ENCODE measurements at regions of chr10 and their contacts with region 1.

Region 1: GRCh38 chr10:61896854-61897661 is 4.4 kb upstream of the ARID5B start:
- DNase-seq: peak in 1 of 2 donors; percentile 82
- H3K4me3 ChIP-seq: peak overlapping the region; percentile 49 to 57
- H3K27ac ChIP-seq: peak overlapping the region; percentile 32 to 56
- H3K4me1 ChIP-seq: peaks cover 0 to 20% of the 10 kb centered on the region in 2 donors
- H3K27me3 ChIP-seq: no peaks in the 10 kb centered on the region
- CTCF ChIP-seq: peak; percentile 61 to 66 (median 64)

Region 2: DNA sequence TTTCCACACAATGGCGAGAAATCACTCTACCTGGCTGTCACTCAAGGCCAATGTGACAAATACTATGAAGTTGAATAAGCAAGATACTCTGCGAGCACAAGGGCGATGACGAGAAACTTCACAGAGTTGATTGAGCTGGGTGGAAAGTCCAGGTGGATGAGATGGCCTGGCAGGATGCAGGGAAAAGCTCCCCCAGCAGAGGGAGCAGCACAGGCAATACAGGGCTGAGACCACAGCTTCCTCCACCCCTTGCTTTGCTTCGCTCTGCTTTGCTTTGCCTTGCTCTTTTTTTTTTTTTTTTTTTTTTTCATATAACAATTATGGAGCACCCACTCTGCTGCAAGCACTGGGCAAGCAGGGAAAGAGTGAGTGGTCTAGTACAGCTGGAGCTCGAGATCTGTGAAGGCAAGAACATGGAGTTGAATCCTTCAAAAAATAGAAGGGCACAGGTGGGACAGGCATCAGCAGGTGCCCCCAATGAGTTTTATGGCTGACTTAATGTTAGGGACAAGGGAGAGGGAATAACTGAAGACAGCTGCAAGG is 146.1 kb before region 1 on chr10:
- intact Hi-C with region 1: loop called (anchors 5 kb)
- DNase-seq: peak in 1 of 2 donors; percentile 69
- H3K4me3 ChIP-seq: no peak overlapping the region
- H3K27ac ChIP-seq: peak overlapping the region; percentile 49 to 65
- H3K4me1 ChIP-seq: peaks cover 0 to 26% of the 10 kb centered on the region in 2 donors
- H3K27me3 ChIP-seq: no peaks in the 10 kb centered on the region
- CTCF ChIP-seq: peak in 2 of 3 experiments; percentile 42

Region 3: DNA sequence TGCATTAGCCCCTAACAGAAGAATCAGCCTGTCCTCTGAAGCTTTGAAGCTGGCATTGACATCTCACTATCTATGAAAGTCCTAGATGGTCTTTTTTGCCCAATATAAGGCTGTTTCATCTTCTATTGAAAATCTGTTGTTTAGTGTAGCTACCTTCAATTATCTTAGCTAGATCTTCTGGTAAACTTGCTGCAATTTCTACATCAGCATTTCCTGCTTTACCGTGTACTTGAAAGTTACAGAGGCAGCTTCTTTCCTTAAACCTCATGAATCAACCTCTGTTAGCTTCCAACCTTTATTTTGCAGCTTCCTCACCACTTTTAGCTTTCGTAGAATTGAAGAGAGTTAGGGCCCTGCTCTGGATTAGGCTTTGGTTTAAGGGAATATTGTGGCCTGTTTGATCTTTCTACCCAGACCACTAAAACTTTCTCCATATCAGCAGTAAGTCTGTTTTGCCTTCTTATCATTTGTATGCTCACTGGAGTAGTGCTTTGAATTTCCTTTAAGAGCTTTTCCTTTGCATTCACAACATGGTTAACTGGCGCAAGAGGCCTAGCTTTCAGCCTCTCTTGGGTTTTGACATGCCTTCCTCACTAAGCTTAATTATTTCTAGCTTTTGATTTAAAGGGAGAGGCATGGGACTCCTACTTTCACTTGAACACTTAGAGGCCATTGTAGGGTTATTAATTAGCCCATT is 36.9 kb after region 1 on chr10:
- intact Hi-C with region 1: no loop called
- DNase-seq: no peak
- H3K4me3 ChIP-seq: no peak overlapping the region
- H3K27ac ChIP-seq: no peak overlapping the region
- H3K4me1 ChIP-seq: peaks cover 0 to 26% of the 10 kb centered on the region in 2 donors
- H3K27me3 ChIP-seq: no peaks in the 10 kb centered on the region
- CTCF ChIP-seq: no peak

Region 4: DNA sequence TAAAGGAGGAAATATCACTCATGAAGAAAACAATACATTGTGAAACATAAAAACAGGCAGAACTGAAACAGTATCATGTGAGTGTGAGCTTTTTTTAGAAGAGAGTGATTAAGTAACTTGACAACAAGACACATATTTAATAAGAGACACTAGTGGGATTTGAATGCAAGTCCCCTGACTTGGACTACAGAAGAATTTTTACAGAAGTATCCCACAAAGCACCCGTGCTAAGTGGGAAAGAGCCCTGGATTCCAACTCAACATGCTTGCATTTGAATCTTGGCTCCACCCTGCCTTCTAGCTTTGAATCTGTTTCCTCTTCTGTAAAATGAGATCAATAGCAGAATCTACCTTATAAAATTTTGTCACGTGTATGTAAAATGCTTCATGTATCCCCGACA is 643.3 kb after region 1 on chr10:
- intact Hi-C with region 1: no loop called
- DNase-seq: no peak
- H3K4me3 ChIP-seq: no peak overlapping the region
- H3K27ac ChIP-seq: no peak overlapping the region
- H3K4me1 ChIP-seq: no peaks in the 10 kb centered on the region
- H3K27me3 ChIP-seq: no peaks in the 10 kb centered on the region
- CTCF ChIP-seq: no peak